B cell (primary cell): ENCODE measurements at regions of chr12 and their contacts with region 1.

Region 1: DNA sequence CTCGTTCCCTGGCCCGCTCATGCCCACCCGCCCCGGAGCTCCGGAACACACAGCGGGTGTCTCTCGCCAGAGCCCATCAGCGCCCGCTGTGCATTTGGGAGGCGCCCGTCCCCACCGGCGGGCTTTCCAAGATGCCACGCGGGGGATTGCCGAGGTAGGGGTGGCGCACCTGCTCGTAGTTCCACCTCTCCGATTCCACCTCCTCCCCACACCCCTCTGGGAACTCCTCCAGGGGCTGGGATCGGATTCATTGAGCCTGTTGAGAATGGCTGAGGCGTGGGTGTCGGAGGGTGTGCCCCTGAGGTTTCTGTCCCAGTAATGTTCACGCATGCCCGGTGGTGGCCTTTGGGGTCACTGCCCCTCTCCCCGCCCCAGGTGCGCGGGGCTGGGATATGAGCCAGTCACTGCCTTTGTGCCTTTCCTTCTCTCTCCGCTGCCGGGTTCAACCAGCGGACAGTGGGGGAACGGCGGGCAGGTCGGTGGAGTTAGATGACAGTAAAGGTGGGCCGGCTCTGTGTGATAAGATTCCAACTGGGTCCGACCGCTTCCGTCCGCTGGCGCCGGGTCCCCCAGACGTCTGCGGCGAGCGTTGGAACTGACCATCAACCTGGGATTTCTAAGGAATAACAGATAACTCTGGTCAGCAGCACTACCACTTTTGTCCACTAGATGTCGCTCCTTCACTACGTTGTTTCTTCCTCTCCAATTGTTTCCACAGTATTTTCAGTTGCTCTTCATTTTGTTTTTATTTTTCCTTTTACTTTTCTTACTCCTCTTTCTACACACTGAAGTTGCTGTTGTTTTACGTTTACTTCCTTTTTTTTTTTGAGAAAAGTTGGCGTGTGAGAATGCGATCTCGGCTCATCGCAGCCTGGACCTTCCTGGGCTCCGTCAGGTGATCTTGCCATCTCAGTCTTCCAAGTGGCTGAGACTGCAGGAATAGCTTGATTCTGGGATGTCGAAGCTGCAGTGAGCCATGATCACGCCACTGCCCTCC is 178.1 kb upstream of the ALG10B start:
- DNase-seq: peak; percentile 66
- ATAC-seq: peak; percentile 28
- H3K4me3 ChIP-seq: peak overlapping the region in 2 of 5 experiments; percentile 4 to 12
- H3K4me3 Mint-ChIP-seq: peak overlapping the region; percentile 55
- H3K27ac ChIP-seq: no peak overlapping the region
- H3K27ac Mint-ChIP-seq: no peak overlapping the region
- H3K4me1 ChIP-seq: peaks cover 4 to 10% of the 10 kb centered on the region in 2 donors
- H3K4me1 Mint-ChIP-seq: peaks cover 7% of the 10 kb centered on the region
- H3K27me3 ChIP-seq: peaks cover 0 to 9% (median 2%) of the 10 kb centered on the region in 4 experiments
- H3K27me3 Mint-ChIP-seq: peaks cover 7% of the 10 kb centered on the region
- CTCF ChIP-seq: peak; percentile 99

Region 2: GRCh38 chr12:38102197-38102596 is 36.3 kb before region 1 on chr12:
- CTCF ChIA-PET with region 1: no interaction called
- POLR2A ChIA-PET with region 1: no interaction called
- intact Hi-C with region 1: no loop called
- DNase-seq: no peak
- ATAC-seq: no peak
- H3K4me3 ChIP-seq: no peak overlapping the region
- H3K4me3 Mint-ChIP-seq: no peak overlapping the region
- H3K27ac ChIP-seq: no peak overlapping the region
- H3K27ac Mint-ChIP-seq: no peak overlapping the region
- H3K4me1 ChIP-seq: no peaks in the 10 kb centered on the region
- H3K4me1 Mint-ChIP-seq: no peaks in the 10 kb centered on the region
- H3K27me3 ChIP-seq: no peaks in the 10 kb centered on the region
- H3K27me3 Mint-ChIP-seq: no peaks in the 10 kb centered on the region
- CTCF ChIP-seq: no peak

Region 3: GRCh38 chr12:38316391-38317129 is 178.0 kb after region 1 on chr12 and contains the start of gene ALG10B:
- CTCF ChIA-PET with region 1: interaction called, 7 read pairs
- POLR2A ChIA-PET with region 1: no interaction called
- intact Hi-C with region 1: loop called (anchors 1 kb)
- DNase-seq: peak; percentile 96
- ATAC-seq: peak; percentile 96
- H3K4me3 ChIP-seq: peak within 1 kb of the TSS; percentile 41 to 80 (median 69)
- H3K4me3 Mint-ChIP-seq: peak within 1 kb of the TSS; percentile 94
- H3K27ac ChIP-seq: peak within 1 kb of the TSS; percentile 77 to 89
- H3K27ac Mint-ChIP-seq: peak within 1 kb of the TSS; percentile 95
- H3K4me1 ChIP-seq: peaks cover 9 to 13% of the 10 kb centered on the region in 2 donors
- H3K4me1 Mint-ChIP-seq: peaks cover 24% of the 10 kb centered on the region
- H3K27me3 ChIP-seq: no peaks in the 10 kb centered on the region
- H3K27me3 Mint-ChIP-seq: no peaks in the 10 kb centered on the region
- CTCF ChIP-seq: peak; percentile 74
- total RNA-seq, gene ALG10B: 10.6 and 13.0 TPM in 2 replicates

Region 4: DNA sequence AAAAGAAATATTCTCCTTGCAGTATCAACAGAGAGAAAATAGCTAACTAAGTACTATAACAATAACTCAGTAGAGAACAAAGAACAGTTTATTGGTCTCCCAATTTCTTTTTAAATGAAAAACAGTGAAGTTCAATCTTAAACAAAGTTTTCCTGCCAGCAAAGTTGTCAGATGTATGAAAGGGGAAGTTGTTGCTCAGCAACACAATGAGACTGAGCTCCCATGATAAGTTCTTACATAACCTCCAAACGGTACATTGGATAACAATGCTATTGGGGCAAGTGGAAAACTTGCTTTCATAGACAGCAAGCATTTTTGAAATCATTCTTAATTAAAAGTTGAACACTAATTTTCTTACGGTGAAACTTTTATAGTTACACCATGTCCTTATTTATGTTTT is 272.9 kb after region 1 on chr12:
- CTCF ChIA-PET with region 1: no interaction called
- POLR2A ChIA-PET with region 1: no interaction called
- intact Hi-C with region 1: no loop called
- DNase-seq: no peak
- ATAC-seq: no peak
- H3K4me3 ChIP-seq: no peak overlapping the region
- H3K4me3 Mint-ChIP-seq: no peak overlapping the region
- H3K27ac ChIP-seq: no peak overlapping the region
- H3K27ac Mint-ChIP-seq: no peak overlapping the region
- H3K4me1 ChIP-seq: no peaks in the 10 kb centered on the region
- H3K4me1 Mint-ChIP-seq: no peaks in the 10 kb centered on the region
- H3K27me3 ChIP-seq: no peaks in the 10 kb centered on the region
- H3K27me3 Mint-ChIP-seq: no peaks in the 10 kb centered on the region
- CTCF ChIP-seq: no peak